Common myeloid progenitor, CD34-positive (primary cell): ENCODE measurements at regions of chr2 and their contacts with region 1.

Region 1: DNA sequence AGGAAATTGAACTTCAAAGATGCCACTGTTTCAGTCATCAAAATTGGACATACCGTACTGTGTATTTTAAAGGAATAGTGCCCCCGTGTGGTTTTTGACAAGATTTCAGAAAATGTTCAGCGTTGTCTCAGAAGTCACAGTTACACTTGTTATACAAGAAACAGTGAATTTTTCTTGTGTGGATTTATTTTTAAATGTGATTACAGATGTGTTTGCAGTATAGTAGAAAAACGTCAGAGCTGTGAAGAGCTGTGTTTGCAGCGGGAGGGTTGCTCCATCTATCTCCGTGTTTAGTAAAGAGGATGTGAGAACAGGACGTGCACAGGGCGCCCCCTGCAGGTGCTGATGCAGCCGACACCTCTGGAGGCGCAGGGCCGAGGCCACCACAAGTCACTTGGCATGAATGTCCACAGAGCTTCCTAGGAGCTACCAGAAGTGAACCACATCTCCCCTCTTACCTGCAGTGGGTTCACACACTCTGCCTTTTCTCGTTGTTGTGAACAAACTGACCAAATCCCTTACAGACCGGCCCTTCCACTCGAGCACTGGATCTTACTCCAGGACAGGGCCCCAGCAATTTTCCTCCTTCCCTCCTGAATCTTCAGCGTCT is 73.1 kb downstream of the CACNB4 start:
- DNase-seq: peak; percentile 80 to 89 (median 86)
- H3K4me3 ChIP-seq: peak overlapping the region in 6 of 7 experiments; percentile 38 to 76 (median 59)
- H3K27ac ChIP-seq: no peak overlapping the region
- H3K4me1 ChIP-seq: peaks cover 3 to 22% (median 9%) of the 10 kb centered on the region in 4 experiments
- H3K27me3 ChIP-seq: no peaks in the 10 kb centered on the region

Region 2: GRCh38 chr2:151999053-151999452 is 26.7 kb before region 1 on chr2:
- CTCF ChIA-PET with region 1: interaction called, 19 read pairs
- POLR2A ChIA-PET with region 1: no interaction called
- DNase-seq: peak; percentile 49 to 60 (median 55)
- H3K4me3 ChIP-seq: no peak overlapping the region
- H3K27ac ChIP-seq: no peak overlapping the region
- H3K4me1 ChIP-seq: peaks cover 0 to 16% (median 3%) of the 10 kb centered on the region in 4 experiments
- H3K27me3 ChIP-seq: no peaks in the 10 kb centered on the region

Region 3: DNA sequence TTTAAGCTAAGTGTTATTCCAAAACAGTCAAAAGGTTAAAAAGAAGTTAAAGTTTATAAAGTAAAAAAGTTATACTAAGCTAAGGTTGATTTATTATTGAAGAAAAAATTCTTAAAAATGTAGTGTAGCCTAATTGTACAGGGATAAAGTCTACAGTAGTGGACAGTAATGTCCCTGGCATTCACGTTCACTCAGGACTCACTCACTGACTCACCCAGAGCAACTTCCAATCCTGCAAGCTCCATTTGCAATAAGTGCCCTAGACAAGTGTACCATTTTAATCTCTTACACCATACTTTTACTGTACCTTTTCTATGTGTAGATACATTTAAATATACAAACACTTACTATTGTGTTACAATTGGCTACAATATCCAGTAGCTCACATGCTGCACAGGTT is 13.1 kb before region 1 on chr2:
- CTCF ChIA-PET with region 1: interaction called, 17 read pairs
- POLR2A ChIA-PET with region 1: no interaction called
- DNase-seq: no peak
- H3K4me3 ChIP-seq: no peak overlapping the region
- H3K27ac ChIP-seq: no peak overlapping the region
- H3K4me1 ChIP-seq: no peaks in the 10 kb centered on the region
- H3K27me3 ChIP-seq: no peaks in the 10 kb centered on the region

Region 4: GRCh38 chr2:152036611-152037469 is 11.1 kb after region 1 on chr2:
- CTCF ChIA-PET with region 1: interaction called, 12 read pairs
- POLR2A ChIA-PET with region 1: no interaction called
- DNase-seq: peak; percentile 79 to 88 (median 82)
- H3K4me3 ChIP-seq: no peak overlapping the region
- H3K27ac ChIP-seq: no peak overlapping the region
- H3K4me1 ChIP-seq: peaks cover 0 to 26% (median 7%) of the 10 kb centered on the region in 4 experiments
- H3K27me3 ChIP-seq: no peaks in the 10 kb centered on the region

Region 5: DNA sequence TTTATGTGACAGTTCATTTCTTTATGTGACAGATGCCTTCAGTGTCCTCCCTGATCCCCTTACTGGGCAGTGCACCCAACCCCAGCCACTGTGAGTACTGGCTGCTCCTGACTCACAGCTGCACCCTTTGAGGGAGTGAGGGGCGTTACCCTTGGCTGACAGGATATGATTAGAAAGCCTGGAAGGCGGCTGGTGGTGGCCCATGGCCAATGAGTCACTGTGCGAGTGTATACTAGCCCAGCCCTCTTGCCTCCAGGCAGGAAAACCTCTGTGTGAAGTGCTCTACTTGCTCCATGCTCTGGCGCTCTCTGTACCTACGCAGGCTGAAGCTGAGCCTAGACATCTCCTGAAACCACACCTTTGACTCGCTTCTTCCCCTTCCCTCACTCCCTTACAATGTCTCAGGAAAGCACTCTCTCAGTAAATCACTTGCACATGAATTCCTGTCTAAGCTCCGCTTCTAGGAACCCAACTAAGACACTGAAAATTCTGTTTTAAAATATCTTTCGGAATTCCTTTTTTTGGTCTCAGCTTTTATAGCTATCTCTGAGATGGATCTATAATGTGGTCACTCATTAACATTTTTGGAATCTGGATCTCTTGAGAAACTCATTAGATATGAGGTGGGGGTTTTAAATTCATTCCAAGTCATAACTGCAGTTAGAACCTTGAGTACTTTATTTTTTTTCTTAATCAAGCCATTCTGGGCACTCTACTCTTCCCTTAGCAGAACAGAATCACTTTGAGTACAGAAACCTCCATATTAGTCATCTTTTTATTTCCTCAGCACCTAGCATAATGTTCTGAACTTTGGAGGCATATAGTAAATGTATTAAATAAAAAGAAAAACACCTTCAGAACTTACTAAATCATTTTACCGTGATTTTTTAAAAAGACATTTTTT is 175.0 kb after region 1 on chr2:
- CTCF ChIA-PET with region 1: no interaction called
- POLR2A ChIA-PET with region 1: no interaction called
- DNase-seq: peak in 2 of 3 donors; percentile 13 to 23
- H3K4me3 ChIP-seq: no peak overlapping the region
- H3K27ac ChIP-seq: no peak overlapping the region
- H3K4me1 ChIP-seq: peaks cover 0 to 13% (median 3%) of the 10 kb centered on the region in 4 experiments
- H3K27me3 ChIP-seq: no peaks in the 10 kb centered on the region